ENCODE measurements at regions of chr11 and their contacts with region 1.

Region 1: DNA sequence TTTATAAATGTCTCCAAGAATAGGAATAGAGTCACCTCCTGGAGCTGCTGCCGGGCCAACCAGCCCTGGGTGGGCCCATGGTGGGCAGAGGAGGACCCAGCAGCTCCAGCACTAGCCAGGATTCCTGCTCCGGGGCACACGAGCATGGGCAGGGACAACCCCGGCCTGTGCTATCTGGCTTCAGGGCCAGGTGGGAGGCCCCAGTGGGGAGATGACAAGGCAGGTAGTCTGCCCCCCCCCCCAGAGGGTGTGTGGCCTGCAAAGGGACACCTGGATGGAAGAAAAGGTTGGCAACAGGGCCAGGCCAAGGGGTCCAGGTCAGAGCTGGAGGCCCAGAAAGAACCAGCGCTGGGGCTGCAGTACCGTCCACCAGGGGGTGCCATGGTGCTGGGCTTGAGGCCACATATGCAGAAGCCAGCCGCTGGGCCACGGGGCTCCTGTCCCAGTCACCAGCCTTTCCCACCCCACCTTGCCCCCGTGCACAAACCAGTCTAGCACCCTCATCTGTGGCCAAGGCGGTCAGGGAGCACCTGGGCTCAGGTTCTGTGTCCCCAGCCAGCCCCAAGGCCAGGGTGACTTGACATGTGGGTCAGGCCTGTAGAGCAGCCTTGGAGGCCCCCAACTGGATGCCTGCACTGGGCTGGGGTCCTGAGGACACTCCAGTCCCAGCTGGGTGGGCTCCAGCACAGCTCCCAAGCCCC is 3.5 kb downstream of the TSPAN32 start:
- DNase-seq: peak; percentile 89
- ATAC-seq: peak; percentile 62
- H3K4me3 Mint-ChIP-seq: peak overlapping the region; percentile 94
- H3K27ac Mint-ChIP-seq: peak overlapping the region; percentile 89
- H3K4me1 Mint-ChIP-seq: peaks cover 55% of the 10 kb centered on the region
- H3K27me3 Mint-ChIP-seq: no peaks in the 10 kb centered on the region

Region 2: DNA sequence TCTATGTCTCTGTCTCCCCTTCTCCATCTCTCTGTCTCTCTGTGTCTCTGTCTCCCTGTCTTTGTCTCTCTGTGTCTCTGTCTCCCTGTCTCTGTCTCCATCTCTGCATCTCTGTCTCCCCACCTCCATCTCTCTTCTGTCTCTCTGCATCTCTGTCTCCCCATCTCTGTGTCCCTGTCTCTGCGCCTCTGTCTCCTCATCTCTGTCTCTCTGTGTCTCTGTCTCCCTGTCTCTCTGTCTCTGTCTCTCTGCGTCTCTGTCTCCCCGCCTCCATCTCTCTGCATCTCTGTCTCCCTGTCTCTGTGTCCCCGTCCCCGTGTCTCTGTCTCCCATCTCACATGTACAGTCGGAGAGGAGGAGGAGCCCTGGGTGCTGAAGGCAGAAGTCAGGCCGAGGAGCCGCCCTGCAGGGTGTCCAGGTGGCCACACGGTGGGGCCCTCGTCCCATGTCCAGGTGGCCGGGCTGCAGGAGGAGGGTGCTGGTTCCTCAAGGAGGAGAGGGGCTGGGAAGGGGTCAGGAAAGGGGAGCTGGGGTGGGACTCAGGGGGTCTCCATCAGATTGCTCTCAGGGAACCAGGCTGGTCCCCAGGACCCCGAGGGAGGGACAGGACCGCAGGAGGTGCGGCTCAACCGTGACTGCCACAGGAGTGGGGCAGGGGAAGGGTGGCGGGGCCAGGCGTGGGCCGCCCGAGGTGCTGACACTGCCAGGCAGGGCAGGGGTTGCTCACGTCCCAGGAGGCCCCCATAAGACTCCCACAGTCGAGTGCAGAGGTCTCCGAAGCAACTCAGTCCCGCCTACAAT is 108.1 kb before region 1 on chr11:
- CTCF ChIA-PET with region 1: interaction called, 17 read pairs
- POLR2A ChIA-PET with region 1: no interaction called
- DNase-seq: peak; percentile 86
- ATAC-seq: peak; percentile 88
- H3K4me3 Mint-ChIP-seq: no peak overlapping the region
- H3K27ac Mint-ChIP-seq: no peak overlapping the region
- H3K4me1 Mint-ChIP-seq: peaks cover 5% of the 10 kb centered on the region
- H3K27me3 Mint-ChIP-seq: peaks cover 12% of the 10 kb centered on the region

Region 3: DNA sequence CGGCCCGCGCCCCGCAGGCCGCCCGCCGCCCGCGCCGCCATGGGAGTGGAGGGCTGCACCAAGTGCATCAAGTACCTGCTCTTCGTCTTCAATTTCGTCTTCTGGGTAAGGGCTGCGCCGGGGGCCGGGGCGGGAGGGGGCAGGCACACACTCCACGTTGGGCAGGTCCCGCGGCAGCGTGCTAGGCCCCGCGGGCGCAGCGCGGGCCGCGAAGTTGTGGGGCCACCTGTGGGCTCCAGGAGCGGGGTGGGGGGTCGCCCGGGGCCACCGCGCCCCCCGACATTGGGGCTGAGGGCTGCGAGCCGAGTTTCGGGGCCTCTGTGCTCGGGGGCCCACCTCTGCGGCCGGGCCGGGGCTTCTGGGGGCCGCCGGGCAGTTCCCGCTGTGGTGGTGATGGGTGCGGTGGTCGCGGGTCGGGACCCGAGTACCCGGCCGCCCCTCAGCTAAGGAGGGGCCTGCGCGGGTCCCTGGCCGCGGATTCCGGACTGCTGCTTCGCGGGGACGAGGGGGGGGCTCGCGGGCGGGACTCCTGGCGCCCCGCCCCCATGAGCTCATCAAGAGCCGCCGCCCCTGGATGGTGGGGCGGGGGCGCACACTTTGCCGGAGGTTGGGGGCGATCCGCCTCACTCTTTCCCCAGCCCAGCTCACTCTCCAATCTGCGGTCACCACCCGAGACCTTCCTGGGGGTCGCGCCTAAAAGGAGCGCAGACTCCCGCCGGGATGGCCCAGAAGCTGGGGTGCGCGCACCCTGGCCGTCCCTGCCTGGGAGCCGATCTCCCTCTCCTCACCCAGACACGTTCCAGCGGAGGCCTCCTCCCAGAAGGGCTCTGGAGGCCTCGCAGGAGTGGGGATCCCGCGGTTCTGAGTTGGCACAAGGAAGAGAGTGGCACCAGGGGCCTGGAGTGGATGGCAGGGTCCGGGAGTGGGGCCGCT is 72.5 kb after region 1 on chr11:
- CTCF ChIA-PET with region 1: interaction called, 23 read pairs
- POLR2A ChIA-PET with region 1: interaction called, 13 read pairs
- DNase-seq: peak; percentile 57
- ATAC-seq: peak; percentile 37
- H3K4me3 Mint-ChIP-seq: peak overlapping the region; percentile 83
- H3K27ac Mint-ChIP-seq: peak overlapping the region; percentile 78
- H3K4me1 Mint-ChIP-seq: peaks cover 27% of the 10 kb centered on the region
- H3K27me3 Mint-ChIP-seq: peaks cover under 1% of the 10 kb centered on the region

Region 4: GRCh38 chr11:2400069-2400760 is 94.9 kb after region 1 on chr11 and contains the start of gene TSSC4:
- CTCF ChIA-PET with region 1: interaction called, 72 read pairs
- POLR2A ChIA-PET with region 1: interaction called, 9 read pairs
- DNase-seq: peak; percentile 100
- ATAC-seq: peak; percentile 90
- H3K4me3 Mint-ChIP-seq: peak within 1 kb of the TSS; percentile 91
- H3K27ac Mint-ChIP-seq: peak within 1 kb of the TSS; percentile 92
- H3K4me1 Mint-ChIP-seq: peaks cover 18% of the 10 kb centered on the region
- H3K27me3 Mint-ChIP-seq: no peaks in the 10 kb centered on the region
- total RNA-seq, gene TSSC4: 45.3 to 49.4 TPM

Region 5: DNA sequence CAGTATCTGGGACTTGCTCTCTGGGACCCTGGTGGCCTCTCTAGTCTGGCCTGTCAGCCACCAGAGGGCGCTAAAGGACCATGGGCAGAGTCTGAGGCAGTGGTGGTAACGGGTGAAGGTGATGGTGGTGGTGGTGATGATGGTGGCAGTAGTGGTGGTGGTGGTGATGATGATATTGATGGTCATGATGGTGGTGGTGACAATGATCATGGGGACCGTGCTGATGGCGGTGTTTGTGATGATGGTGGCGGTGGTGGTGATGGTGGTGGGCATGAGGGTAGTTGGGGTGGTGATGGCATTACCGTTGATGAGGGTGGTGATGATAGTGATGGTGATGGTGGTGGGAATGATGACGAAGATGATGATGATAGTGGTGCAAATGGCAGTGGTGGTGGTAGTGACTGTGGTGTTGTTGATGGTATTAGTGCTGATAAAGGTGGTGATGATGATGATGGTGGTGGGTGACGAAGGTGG is 123.1 kb after region 1 on chr11:
- CTCF ChIA-PET with region 1: interaction called, 351 read pairs
- POLR2A ChIA-PET with region 1: no interaction called
- DNase-seq: peak; percentile 78
- ATAC-seq: peak; percentile 86
- H3K4me3 Mint-ChIP-seq: no peak overlapping the region
- H3K27ac Mint-ChIP-seq: no peak overlapping the region
- H3K4me1 Mint-ChIP-seq: no peaks in the 10 kb centered on the region
- H3K27me3 Mint-ChIP-seq: no peaks in the 10 kb centered on the region

Measured in activated CD8-positive, alpha-beta T cell treated with anti-CD3 and anti-CD28 coated beads, Interleukin-2, amount 10 ng/mL, durations not matched to agents 7 days and 5 days (primary cell).